ENCODE measurements at regions of chr6 and their contacts with region 1.

Region 1: DNA sequence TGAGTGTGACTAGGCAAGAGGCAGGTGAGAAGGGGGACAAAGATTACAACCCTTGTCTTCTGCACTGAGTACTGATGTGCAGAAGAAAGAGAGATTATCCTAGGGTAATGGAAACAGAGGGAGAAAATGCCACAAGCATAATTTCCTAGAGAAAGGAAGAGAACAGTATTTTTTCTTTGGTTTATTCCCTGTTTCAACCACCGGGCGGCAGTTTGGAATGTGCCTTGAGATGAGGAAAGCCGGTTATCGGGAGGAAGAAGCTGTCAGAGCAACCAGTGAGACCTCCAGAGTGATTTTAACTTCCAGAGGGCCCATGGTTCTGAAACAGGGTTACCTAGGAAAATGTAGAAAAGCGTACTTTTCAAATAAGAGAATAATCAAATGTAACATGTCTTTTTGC is 121.4 kb downstream of the REV3L start:
- DNase-seq: peak; percentile 39
- ATAC-seq: peak; percentile 77
- H3K4me3 ChIP-seq: no peak overlapping the region
- H3K27ac ChIP-seq: no peak overlapping the region
- H3K4me1 ChIP-seq: peaks cover 11% of the 10 kb centered on the region
- H3K27me3 ChIP-seq: no peaks in the 10 kb centered on the region
- CTCF ChIP-seq: peak; percentile 44
- EP300 ChIP-seq: no peak
- POLR2A ChIP-seq: no peak
- RAD21 ChIP-seq: peak; percentile 40; the same call in 1 of the 2 replicates

Region 2: DNA sequence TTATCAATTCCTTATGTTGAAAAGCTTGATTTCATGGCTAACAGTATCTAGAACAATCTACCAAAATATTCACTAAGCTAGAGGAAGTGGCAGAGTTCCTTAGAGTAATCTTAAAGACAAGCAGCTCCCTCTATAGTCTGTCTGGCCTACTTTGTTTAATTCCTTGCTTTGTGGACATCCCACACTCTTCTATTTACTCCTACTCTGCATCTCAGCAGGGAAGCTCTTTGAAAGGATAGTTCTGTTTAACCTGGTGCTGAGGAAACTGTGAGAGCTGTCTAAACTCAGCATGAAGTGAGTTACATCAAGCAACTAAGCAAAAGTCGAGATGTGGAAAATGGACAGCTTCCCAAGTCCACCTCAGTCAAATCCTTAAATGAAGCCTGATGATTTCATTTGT is 117.1 kb after region 1 on chr6:
- CTCF ChIA-PET with region 1: no interaction called
- POLR2A ChIA-PET with region 1: no interaction called
- in situ Hi-C with region 1: no loop called
- intact Hi-C with region 1: loop called (anchors 2 kb)
- DNase-seq: peak; percentile 28
- ATAC-seq: no peak
- H3K4me3 ChIP-seq: no peak overlapping the region
- H3K27ac ChIP-seq: no peak overlapping the region
- H3K4me1 ChIP-seq: peaks cover 43% of the 10 kb centered on the region
- H3K27me3 ChIP-seq: peaks cover 0 to 3% of the 10 kb centered on the region in 2 experiments; a peak in 1 of 5 replicates
- CTCF ChIP-seq: peak; percentile 32
- EP300 ChIP-seq: no peak
- POLR2A ChIP-seq: no peak
- RAD21 ChIP-seq: no peak